Caco-2 (cell line): ENCODE measurements at regions of chr6 and their contacts with region 1.

Region 1: DNA sequence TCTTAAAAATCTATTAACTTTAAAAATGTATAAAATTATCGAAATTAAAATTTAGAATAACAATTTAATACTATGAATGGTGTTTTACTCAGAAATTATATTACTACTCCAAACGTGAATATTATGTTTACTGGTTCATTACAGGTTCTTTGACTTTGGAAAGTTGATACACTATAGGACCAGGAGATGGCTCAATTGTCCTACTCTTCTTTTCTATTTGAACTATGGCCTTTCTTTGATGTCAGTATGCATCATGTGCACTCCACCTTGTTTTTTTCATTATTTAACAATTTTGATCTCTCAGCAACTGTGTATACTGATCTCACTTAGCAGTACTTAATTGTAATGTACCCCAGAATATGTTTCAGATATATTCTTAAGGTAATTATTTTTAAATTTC is 391.5 kb upstream of the MANEA start:
- DNase-seq: no peak
- H3K4me3 ChIP-seq: no peak overlapping the region
- H3K4me3 Mint-ChIP-seq: no peak overlapping the region
- H3K27ac Mint-ChIP-seq: no peak overlapping the region
- H3K4me1 ChIP-seq: no peaks in the 10 kb centered on the region
- H3K4me1 Mint-ChIP-seq: no peaks in the 10 kb centered on the region
- H3K27me3 ChIP-seq: no peaks in the 10 kb centered on the region
- H3K27me3 Mint-ChIP-seq: peaks cover 2% of the 10 kb centered on the region
- CTCF ChIP-seq: no peak

Region 2: GRCh38 chr6:95352064-95352795 is 166.4 kb after region 1 on chr6:
- CTCF ChIA-PET with region 1: no interaction called
- POLR2A ChIA-PET with region 1: no interaction called
- intact Hi-C with region 1: loop called (anchors 5 kb)
- DNase-seq: no peak
- H3K4me3 ChIP-seq: no peak overlapping the region
- H3K4me3 Mint-ChIP-seq: no peak overlapping the region
- H3K27ac Mint-ChIP-seq: no peak overlapping the region
- H3K4me1 ChIP-seq: no peaks in the 10 kb centered on the region
- H3K4me1 Mint-ChIP-seq: no peaks in the 10 kb centered on the region
- H3K27me3 ChIP-seq: no peaks in the 10 kb centered on the region
- H3K27me3 Mint-ChIP-seq: no peaks in the 10 kb centered on the region
- CTCF ChIP-seq: peak in 1 of 2 experiments; percentile 9